Dorsolateral prefrontal cortex (tissue), 120 donors: ENCODE measurements at regions of chr2 and their contacts with region 1.

Region 1: GRCh38 chr2:65576861-65577601 is 144.6 kb upstream of the SPRED2 start:
- DNase-seq: no peak
- H3K4me3 ChIP-seq: no peak overlapping the region
- H3K27ac ChIP-seq: no peak overlapping the region
- H3K27me3 ChIP-seq: no peaks in the 10 kb centered on the region
- CTCF ChIP-seq: no peak

Region 2: GRCh38 chr2:64586883-64587481 is 990.0 kb before region 1 on chr2:
- intact Hi-C with region 1: loop called in 1 of 2 experiments (anchors 10 kb)
- DNase-seq: no peak
- H3K4me3 ChIP-seq: no peak overlapping the region
- H3K27ac ChIP-seq: peak overlapping the region in 4 of 59 donors; percentile 2 to 40 (median 18)
- H3K27me3 ChIP-seq: no peaks in the 10 kb centered on the region
- CTCF ChIP-seq: peak; percentile 16 to 85 (median 68)

Region 3: GRCh38 chr2:65064728-65065552 is 512.1 kb before region 1 on chr2:
- intact Hi-C with region 1: loop called in 1 of 2 experiments (anchors 10 kb)
- DNase-seq: peak in 6 of 10 donors; percentile 59 to 78 (median 68)
- H3K4me3 ChIP-seq: peak overlapping the region in 46 of 59 donors; percentile 1 to 54 (median 20)
- H3K27ac ChIP-seq: peak overlapping the region; percentile 13 to 88 (median 75)
- H3K27me3 ChIP-seq: no peaks in the 10 kb centered on the region
- CTCF ChIP-seq: peak; percentile 50 to 79 (median 68)

Region 4: GRCh38 chr2:65264821-65265670 is 312.0 kb before region 1 on chr2:
- intact Hi-C with region 1: loop called (anchors 2 to 5 kb)
- DNase-seq: peak in 3 of 10 donors; percentile 9 to 50 (median 37)
- H3K4me3 ChIP-seq: no peak overlapping the region
- H3K27ac ChIP-seq: no peak overlapping the region
- H3K27me3 ChIP-seq: no peaks in the 10 kb centered on the region
- CTCF ChIP-seq: peak; percentile 63 to 92 (median 82)

Region 5: DNA sequence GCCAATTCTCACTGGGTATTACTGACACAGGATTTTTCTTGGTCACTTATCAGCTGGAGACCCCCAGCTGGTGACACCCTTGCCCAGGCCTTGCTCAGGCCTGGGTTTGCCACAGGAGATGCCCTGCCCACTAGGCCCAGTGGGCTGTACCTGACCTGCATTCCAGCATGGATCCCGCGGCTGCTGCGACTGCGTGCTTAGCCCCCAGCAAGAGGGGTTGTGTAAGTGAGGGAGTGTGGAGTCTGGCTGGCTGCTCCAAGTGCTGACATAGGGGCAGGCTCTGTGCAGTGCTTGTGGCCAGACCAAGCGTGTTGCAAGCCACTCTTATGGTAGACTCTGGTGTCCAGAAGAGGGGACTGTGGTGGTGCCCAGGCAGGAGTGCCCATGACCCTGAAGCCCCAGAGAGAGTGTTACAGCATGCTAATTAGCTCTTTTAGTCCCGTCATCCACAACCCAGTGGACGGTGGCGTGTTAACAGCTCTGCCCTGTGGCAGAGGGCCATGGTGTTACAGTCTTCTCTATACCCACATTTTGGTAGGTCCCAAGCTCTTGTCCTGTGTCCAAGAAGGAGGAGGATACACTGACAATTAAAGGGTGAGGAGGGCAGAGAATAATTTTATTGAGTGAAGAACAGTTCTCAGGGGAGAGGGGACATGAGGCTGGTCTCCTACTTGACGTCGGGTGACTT is 366.2 kb after region 1 on chr2:
- intact Hi-C with region 1: no loop called
- DNase-seq: no peak
- H3K4me3 ChIP-seq: no peak overlapping the region
- H3K27ac ChIP-seq: no peak overlapping the region
- H3K27me3 ChIP-seq: peaks cover 0 to 3% (median 0%) of the 10 kb centered on the region in 45 donors
- CTCF ChIP-seq: no peak